Dorsolateral prefrontal cortex (tissue), 120 donors: ENCODE measurements at regions of chr10 and their contacts with region 1.

Region 1: DNA sequence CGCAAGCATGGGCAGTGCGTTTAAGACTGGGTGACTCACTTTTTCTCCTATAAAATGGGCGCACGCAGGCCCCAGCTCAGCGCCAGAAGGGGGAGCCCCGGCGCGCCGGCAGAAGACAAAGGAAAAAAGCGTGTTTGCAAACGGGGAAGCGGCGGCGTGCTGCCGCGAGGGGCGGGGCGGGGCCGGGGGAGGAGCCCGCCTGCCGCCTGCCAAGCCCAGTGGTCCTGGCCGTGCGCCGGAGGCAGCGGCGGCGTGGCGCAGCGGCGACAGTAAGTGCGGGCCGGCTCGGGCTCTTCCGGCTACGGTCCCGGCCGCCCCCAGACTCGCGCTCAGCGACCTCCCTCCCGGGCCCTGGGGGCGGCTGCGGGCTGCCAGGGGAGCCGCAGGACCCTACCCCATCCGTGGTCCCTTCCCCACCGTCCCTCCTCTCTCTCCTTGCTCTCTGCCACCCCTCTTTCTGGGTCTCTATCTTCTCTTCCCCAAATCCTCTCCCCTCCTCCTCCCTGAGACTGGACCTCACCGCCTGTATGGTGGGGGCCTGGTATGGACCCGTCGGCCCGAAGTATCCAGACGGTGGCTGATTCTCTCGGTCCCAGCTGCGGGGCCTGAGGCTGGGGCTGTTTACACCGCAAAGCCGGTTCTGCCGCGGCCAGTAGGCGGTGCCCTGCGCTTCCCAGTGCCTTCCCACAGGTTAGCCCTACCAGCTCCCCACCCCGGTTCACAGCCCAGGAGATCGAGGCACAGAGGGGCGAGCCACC is at the start of gene SLC29A3:
- DNase-seq: peak; percentile 74 to 87 (median 80)
- H3K4me3 ChIP-seq: peak within 1 kb of the TSS; percentile 61 to 97 (median 81)
- H3K27ac ChIP-seq: peak within 1 kb of the TSS; percentile 50 to 94 (median 86)
- H3K27me3 ChIP-seq: no peaks in the 10 kb centered on the region
- CTCF ChIP-seq: peak; percentile 40 to 77 (median 62)
- total RNA-seq, gene SLC29A3: 5.1 to 15.4 (median 9.2) TPM

Region 2: GRCh38 chr10:71112138-71112785 is 207.0 kb before region 1 on chr10:
- intact Hi-C with region 1: no loop called
- DNase-seq: no peak
- H3K4me3 ChIP-seq: no peak overlapping the region
- H3K27ac ChIP-seq: no peak overlapping the region
- H3K27me3 ChIP-seq: no peaks in the 10 kb centered on the region
- CTCF ChIP-seq: no peak

Region 3: DNA sequence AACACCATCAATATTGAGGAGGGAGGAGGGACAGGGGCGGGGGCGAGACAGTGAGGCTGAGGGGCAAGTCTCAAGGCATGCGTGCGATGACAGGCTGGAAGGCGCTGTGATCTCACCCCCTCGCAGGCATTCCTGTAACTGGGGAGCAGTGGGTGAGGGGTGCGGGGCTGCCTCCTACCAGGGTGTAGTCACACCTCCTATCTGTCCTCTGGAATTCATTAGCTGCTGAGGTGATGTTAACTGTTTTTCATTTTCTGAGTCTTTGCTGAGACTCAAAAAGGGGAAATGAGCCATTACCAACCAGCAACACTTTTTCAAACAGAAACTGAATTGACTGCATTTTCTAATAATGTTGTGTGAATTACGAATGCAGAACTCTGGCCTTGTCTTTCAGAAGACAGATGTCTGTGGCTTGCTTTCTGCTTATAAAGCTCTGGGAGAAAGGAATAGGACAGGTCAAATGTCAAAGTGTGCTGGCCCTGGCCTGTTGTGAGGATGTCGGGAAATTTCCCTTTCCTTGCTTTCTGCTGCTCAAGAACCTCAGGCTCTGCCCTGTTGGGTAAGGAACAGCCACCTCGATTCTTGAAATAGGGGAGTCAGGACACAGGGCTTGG is 53.8 kb after region 1 on chr10:
- intact Hi-C with region 1: loop called (anchors 1 to 5 kb)
- DNase-seq: no peak
- H3K4me3 ChIP-seq: no peak overlapping the region
- H3K27ac ChIP-seq: peak overlapping the region in 30 of 59 donors; percentile 3 to 67 (median 40)
- H3K27me3 ChIP-seq: no peaks in the 10 kb centered on the region
- CTCF ChIP-seq: no peak

Region 4: DNA sequence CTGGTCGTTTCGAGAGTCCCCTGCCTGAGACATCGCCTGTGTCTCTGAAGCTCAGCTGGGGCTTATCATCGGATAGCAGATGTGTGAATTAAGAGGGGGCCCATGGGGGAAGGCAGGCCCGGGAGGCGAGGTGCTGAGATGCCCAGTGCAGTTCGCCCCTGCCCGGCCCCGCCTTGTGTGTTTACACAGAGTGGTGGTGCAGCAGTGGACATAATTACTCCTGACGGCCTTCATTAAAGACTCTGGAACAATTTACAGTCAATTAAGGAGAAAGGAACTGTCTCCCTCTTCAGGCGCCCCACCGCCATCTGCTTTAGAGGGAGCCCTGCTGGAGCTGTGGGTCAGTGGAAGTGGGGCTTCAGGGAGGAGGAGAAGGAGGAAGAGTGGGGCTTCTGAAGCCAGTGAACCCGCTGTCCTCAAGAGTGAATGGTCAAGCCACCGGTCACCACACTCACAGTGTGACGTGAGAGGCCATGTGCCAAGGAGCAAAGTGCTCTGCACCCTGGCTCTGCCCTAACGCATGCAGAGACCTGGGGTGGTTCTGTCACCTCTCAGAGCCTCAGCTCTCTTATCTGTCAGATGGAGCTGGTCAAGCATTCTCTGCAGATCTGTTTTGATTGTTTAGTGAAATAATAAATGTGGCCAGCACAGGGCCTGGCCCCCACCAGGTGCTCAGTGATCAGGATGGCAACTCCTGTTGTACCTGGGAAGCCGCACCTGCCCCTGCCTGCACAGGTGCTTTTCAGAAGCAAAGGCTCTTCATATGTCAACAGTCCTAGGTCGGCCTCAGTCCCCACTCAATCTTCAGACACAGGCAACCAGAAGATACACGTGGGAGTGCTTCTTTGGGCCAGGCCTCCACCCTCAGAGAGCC is 143.1 kb after region 1 on chr10:
- intact Hi-C with region 1: no loop called
- DNase-seq: peak in 1 of 10 donors; percentile 70
- H3K4me3 ChIP-seq: no peak overlapping the region
- H3K27ac ChIP-seq: peak overlapping the region in 1 of 59 donors; percentile 76
- H3K27me3 ChIP-seq: peaks cover 0 to 6% (median 0%) of the 10 kb centered on the region in 45 donors
- CTCF ChIP-seq: no peak

Region 5: DNA sequence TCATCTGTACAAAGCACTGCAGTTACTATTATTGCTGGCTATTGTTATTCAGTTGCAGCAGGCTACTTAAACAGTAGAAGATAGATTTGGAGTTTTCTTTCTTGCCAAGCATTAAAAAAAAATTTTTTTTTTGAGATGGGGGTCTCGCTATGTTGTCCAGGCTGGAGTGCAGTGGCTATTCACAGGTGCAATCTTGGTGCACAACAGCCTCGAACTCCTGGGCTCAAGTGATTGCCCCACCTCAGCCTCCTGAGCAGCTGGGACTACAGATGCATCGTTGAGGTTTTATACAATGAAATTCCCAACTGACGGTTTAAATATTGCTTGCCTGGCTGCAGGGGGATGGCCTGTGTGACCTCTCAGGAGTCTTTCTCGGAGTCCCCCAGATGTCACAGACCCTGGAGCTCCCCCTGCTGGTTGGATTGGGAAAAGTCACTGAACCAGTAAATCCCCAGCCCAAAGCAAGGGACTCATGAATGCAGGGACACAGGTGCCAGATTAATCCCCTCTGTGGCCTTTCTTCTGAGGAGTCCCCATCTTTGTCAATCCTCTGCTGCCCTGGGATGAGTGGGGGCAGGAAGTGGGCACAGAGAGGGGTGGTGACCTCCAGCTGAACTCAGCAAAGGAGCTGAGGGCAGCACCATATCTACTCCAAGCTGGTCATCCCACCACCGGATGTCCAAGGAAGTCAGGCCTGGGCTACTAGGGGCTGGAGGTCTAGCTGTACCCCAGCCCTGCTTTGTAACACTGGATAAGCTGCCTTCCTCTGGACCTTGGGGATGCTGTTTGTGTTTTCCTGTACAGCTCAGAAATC is 250.8 kb after region 1 on chr10:
- intact Hi-C with region 1: loop called (anchors 1 to 5 kb)
- DNase-seq: peak in 9 of 10 donors; percentile 52 to 83 (median 74)
- H3K4me3 ChIP-seq: no peak overlapping the region
- H3K27ac ChIP-seq: peak overlapping the region in 1 of 59 donors; percentile 18
- H3K27me3 ChIP-seq: no peaks in the 10 kb centered on the region
- CTCF ChIP-seq: peak; percentile 75 to 94 (median 87)

Region 6: DNA sequence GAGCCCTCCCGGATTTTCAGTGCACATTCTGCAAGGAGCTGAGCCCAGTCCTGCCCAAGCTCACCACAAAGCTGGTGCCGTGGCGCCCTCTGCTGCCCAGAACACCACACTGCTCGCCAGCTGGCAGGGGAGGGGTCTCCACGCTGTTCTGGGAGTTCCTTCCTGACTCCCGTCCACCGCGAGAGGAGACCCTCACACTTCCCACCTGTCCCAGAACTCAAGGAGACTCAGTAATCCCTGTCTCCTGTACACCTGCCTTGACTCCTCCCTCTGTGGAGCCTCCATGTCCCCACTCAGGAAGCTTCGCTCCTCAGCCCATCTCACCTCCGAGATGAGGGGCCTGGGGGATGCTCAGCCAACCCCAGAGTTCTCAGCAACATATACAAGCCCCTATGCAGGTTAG is 389.1 kb after region 1 on chr10:
- intact Hi-C with region 1: loop called (anchors 2 to 5 kb)
- DNase-seq: peak; percentile 41 to 79 (median 63)
- H3K4me3 ChIP-seq: no peak overlapping the region
- H3K27ac ChIP-seq: peak overlapping the region in 1 of 59 donors; percentile 31
- H3K27me3 ChIP-seq: no peaks in the 10 kb centered on the region
- CTCF ChIP-seq: peak; percentile 55 to 95 (median 87)

Region 7: GRCh38 chr10:71840177-71840957 is 521.1 kb after region 1 on chr10:
- intact Hi-C with region 1: no loop called
- DNase-seq: peak; percentile 67 to 92 (median 88)
- H3K4me3 ChIP-seq: peak overlapping the region in 54 of 59 donors; percentile 0 to 55 (median 24)
- H3K27ac ChIP-seq: peak overlapping the region in 57 of 59 donors; percentile 13 to 98 (median 91)
- H3K27me3 ChIP-seq: no peaks in the 10 kb centered on the region
- CTCF ChIP-seq: peak in 5 of 56 donors; percentile 9 to 17 (median 12)

Region 8: DNA sequence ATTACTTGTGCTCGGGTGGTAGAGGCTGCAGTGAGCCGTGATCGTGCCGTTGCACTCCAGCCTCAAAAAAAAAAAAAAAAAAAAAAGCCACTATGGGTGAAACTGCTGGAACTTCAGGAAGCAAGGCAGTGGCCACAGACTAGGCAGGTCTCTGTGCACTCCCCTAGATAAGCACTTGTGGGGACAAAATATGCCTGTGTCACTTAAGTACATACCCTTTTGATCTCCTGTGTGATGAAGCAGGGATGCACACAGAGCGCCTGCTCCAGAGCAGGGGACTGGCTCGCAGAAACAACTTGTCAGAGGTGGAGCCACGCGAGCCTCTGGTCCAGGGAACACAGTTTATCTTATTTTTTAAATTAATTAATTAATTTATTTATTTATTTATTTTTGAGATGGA is 574.7 kb after region 1 on chr10:
- intact Hi-C with region 1: loop called (anchors 2 to 10 kb)
- DNase-seq: no peak
- H3K4me3 ChIP-seq: no peak overlapping the region
- H3K27ac ChIP-seq: no peak overlapping the region
- H3K27me3 ChIP-seq: no peaks in the 10 kb centered on the region
- CTCF ChIP-seq: no peak

Region 9: DNA sequence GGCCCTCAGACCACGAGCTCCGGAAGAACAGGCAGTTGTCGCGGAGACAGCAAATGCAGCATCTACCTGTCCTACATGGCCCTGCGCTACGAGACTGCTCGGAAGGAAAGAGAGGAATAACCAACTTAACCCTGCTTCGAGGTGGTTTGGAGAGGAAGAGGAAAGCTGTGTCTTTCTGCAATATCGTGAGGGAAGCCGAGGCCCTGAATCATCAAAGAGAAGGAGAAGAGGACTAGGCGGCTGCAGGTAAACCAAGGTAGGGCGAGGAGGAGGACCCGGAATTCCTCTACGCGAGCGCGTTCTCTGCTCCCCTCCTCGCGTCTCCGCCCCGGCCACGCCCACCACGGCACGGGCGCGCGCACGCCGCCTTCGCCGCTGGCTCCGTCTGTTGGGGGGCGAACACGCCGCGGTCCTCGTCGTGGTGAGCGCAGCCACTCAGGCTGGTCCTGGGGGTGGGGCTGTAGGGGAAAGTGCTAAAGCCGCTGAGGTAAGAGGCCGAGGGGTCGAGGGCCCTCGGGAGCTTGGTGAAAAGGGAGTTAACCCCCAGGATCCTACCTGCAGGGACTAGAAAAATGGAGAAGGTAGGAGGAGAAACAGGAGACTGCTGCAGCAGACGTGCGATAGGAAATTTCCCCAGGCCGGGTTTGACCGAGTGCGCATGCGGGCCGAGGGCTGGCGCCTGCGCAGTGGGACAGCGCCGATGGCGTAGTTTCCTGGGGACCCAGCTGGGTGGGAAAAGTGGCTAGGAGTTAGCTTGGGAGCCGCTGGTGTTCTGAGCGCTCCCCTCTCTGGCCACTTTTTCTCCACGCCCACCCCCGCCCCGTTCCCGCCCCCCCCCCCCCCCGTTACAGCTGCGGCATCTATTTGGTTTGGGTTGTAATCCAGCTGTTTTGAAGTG is 896.7 kb after region 1 on chr10 and contains the starts of genes ANAPC16 and ASCC1:
- intact Hi-C with region 1: loop called in 1 of 2 experiments (anchors 10 kb)
- DNase-seq: peak; percentile 75 to 94 (median 88)
- H3K4me3 ChIP-seq: peak within 1 kb of the TSS; percentile 61 to 97 (median 82)
- H3K27ac ChIP-seq: peak within 1 kb of the TSS; percentile 95 to 100 (median 100)
- H3K27me3 ChIP-seq: no peaks in the 10 kb centered on the region
- CTCF ChIP-seq: peak in 22 of 56 donors; percentile 10 to 52 (median 26)
- total RNA-seq, gene ANAPC16: 27.8 to 74.8 (median 40.9) TPM
- total RNA-seq, gene ASCC1: 22.8 to 68.2 (median 40.7) TPM